Common myeloid progenitor, CD34-positive (primary cell): ENCODE measurements at regions of chr2 and their contacts with region 1.

Region 1: GRCh38 chr2:26316041-26316440 is 29.9 kb upstream of the SELENOI start:
- DNase-seq: peak in 2 of 3 donors; percentile 31 to 39
- H3K4me3 ChIP-seq: no peak overlapping the region
- H3K27ac ChIP-seq: no peak overlapping the region
- H3K4me1 ChIP-seq: no peaks in the 10 kb centered on the region
- H3K27me3 ChIP-seq: no peaks in the 10 kb centered on the region

Region 2: DNA sequence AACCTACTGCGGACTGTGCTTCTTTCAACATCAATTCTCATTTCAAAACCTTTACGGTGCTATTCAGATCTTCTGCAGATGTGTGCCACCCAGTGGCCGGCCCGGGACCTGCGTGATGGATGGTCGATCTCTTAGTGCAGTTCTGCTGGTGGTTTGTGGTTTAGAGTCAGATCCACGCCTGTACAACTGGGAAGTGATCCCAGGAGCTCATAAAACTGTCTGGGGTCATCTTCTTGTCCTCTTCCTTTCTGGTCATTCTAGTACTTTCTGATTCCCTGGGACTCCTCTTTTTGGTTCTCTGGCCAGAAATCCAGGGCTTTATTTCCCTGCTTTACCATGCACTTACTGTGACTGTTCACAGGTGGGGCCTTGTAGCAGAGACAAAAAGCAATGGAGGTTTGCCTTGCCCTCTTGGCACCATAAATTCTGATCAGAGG is 14.1 kb after region 1 on chr2:
- CTCF ChIA-PET with region 1: interaction called, 23 read pairs
- POLR2A ChIA-PET with region 1: no interaction called
- DNase-seq: peak; percentile 84 to 87 (median 87)
- H3K4me3 ChIP-seq: peak overlapping the region in 2 of 7 experiments; percentile 19 to 37
- H3K27ac ChIP-seq: no peak overlapping the region
- H3K4me1 ChIP-seq: peaks cover 2 to 39% (median 9%) of the 10 kb centered on the region in 4 experiments
- H3K27me3 ChIP-seq: no peaks in the 10 kb centered on the region

Region 3: GRCh38 chr2:26376799-26377198 is 60.8 kb after region 1 on chr2:
- CTCF ChIA-PET with region 1: no interaction called
- POLR2A ChIA-PET with region 1: no interaction called
- DNase-seq: no peak
- H3K4me3 ChIP-seq: no peak overlapping the region
- H3K27ac ChIP-seq: no peak overlapping the region
- H3K4me1 ChIP-seq: no peaks in the 10 kb centered on the region
- H3K27me3 ChIP-seq: no peaks in the 10 kb centered on the region